ENCODE measurements at regions of chr15 and their contacts with region 1.

Region 1: DNA sequence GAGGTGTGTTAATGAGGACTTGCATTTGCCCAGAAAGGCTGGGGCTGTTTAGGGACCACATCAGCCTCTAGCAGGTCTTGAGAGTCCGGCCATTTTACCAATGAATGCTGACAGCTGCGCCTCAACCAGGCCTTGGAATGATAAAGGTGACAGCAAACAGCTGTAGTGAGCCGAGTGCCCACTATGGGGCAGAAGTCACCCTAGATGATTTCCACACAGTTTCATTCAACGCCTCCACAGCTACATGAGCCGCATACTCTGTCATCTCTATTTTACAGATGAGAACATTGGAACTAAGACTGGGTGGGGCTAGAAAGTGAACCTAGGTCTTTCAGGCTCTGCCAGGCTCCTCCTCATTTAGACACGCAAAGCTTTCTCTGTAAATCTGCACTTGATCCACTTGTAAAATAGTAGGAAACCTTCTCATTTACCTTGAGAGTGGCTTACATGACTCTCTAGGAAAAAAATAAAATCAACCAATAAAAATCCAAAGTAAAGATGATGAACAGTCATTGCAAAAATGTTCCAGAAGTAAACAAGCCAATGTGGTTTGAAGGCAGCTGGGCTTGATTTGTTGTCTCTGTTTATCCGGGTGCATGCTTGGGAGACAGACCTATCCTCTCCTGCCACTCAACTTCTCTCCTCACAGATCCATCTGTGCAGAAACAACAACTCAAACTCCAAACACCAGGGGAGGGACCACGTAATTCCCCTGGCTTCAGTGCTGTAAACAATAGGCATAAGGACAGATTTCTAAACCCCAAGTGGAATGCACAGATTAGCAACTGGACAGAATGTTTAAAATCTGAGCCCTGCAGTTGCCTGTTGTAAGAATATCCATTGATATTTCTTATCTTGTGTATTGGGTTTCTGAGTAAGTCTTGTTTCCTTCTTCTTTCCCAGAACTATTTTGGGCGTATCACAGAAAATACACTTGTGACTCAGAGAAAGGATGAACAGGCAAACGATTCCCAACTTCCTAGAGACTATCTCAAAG is 31.5 kb upstream of the LDHAL6B start:
- DNase-seq: peak; percentile 84
- H3K4me3 Mint-ChIP-seq: peak overlapping the region; percentile 29
- H3K27ac Mint-ChIP-seq: peak overlapping the region; percentile 93
- H3K4me1 Mint-ChIP-seq: peaks cover 22% of the 10 kb centered on the region
- H3K27me3 Mint-ChIP-seq: no peaks in the 10 kb centered on the region
- CTCF ChIP-seq: peak; percentile 69

Region 2: DNA sequence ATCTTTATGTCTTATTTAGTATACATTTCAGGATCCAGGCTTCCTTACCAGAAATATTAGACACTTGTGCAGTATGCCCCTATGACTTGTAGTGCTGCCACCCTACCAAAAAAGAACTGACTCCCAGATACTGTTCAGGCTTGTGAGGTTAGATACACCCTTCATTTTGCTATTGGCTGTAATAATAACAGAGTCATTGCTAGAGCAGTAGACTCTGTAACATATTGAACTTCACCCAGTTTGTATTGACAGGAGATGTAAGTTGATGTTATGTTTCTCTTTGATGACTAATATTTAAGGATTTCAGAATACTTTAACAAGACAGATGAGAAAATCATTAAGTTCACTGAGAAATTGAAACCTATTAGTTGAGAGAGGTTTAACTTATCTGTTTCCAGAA is 154.8 kb before region 1 on chr15:
- CTCF ChIA-PET with region 1: no interaction called
- POLR2A ChIA-PET with region 1: no interaction called
- intact Hi-C with region 1: no loop called
- DNase-seq: no peak
- H3K4me3 Mint-ChIP-seq: no peak overlapping the region
- H3K27ac Mint-ChIP-seq: no peak overlapping the region
- H3K4me1 Mint-ChIP-seq: peaks cover 5% of the 10 kb centered on the region
- H3K27me3 Mint-ChIP-seq: no peaks in the 10 kb centered on the region
- CTCF ChIP-seq: no peak

Region 3: GRCh38 chr15:59237119-59237855 is 62.2 kb after region 1 on chr15:
- CTCF ChIA-PET with region 1: interaction called, 4 read pairs
- POLR2A ChIA-PET with region 1: interaction called, 11 read pairs
- intact Hi-C with region 1: loop called (anchors 10 kb)
- DNase-seq: no peak
- H3K4me3 Mint-ChIP-seq: no peak overlapping the region
- H3K27ac Mint-ChIP-seq: peak overlapping the region; percentile 39
- H3K4me1 Mint-ChIP-seq: peaks cover 16% of the 10 kb centered on the region
- H3K27me3 Mint-ChIP-seq: no peaks in the 10 kb centered on the region
- CTCF ChIP-seq: no peak

Region 4: DNA sequence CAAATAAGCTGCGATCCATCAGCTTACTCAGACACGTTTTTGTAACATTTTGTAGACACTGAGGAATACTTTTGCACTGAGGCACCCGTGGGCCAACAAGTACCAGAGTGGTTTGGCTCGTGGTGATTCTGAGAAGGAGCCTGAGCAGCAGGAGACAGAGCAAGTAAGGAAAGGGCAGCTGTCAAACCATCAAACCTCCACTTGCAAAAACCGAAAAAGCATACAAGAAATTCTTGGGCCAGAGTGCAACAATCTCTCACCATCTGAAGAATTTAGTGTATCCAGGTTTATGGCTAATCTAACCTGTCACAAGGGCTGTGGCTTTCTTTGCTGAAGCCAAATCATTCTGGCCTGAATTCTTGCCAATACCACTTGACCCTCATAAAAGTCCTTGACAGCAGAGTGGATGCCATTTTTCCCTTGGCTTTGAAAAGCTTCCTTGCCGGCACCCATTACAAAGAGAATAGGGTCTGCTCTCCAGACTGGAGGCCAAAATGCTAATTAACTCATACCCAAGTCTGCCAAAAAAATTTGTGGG is 140.8 kb after region 1 on chr15:
- CTCF ChIA-PET with region 1: no interaction called
- POLR2A ChIA-PET with region 1: no interaction called
- intact Hi-C with region 1: no loop called
- DNase-seq: no peak
- H3K4me3 Mint-ChIP-seq: no peak overlapping the region
- H3K27ac Mint-ChIP-seq: no peak overlapping the region
- H3K4me1 Mint-ChIP-seq: peaks cover 29% of the 10 kb centered on the region
- H3K27me3 Mint-ChIP-seq: no peaks in the 10 kb centered on the region
- CTCF ChIP-seq: no peak

Measured in MCF 10A (cell line).